Sigmoid colon (tissue), 7 donors: ENCODE measurements at regions of chr7 and their contacts with region 1.

Region 1: DNA sequence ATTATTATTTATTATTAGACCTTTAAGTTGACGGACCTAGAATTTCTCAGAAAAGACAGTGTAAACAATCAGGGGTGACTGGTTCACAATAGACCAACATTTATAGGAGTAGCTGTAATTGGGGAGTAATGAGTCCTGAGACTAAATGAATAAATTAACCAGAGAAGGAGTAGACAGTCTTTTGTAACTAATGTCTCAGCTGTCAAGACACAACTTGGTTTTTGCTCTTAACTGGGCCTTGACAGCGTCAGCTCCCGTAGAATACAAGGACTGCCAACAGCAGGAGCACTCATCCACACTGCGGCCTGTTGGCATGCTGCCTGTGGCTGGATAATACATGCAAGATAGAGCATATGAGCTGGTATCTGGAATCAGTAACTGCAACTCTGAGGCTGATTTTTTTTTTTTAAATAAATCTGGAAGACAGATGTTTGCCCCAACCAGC is 123.9 kb downstream of the CACNA2D1 start:
- DNase-seq: peak; percentile 91
- H3K4me3 ChIP-seq: no peak overlapping the region
- H3K27ac ChIP-seq: peak overlapping the region in 3 of 4 donors; percentile 37 to 72 (median 69)
- H3K4me1 ChIP-seq: peaks cover 0 to 57% (median 38%) of the 10 kb centered on the region in 4 donors
- H3K27me3 ChIP-seq: no peaks in the 10 kb centered on the region
- CTCF ChIP-seq: no peak
- EP300 ChIP-seq: no peak
- POLR2A ChIP-seq: no peak

Region 2: DNA sequence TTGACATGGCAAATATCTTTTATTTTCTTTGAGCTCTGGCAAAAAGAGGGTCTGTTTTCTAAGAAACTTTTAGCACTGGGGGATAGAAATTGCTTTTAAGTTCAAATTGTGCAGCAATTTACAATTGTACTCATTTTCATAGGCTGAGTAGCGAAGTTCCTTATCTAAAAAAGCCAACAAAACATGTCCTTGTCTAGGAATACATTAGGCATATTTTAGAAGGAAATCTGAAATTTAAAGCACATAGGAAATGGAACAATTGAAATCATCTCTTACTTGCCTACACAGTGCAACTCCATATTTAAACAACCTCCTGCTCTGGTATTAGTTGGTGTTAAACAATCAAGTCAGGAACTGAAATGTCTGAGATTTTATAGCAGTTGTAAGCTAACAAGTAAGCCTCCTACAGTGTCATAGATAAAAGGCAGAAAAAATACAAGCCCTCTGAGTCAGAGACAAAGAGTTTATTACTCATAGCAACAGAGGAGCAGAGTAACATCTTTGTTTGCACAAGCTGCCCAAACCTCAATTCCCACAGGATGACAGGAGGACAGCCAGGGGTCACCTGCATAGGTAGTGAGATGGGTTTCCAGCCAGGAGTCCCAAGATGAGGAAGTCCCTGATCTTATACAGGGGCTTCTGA is 269.7 kb before region 1 on chr7:
- intact Hi-C with region 1: loop called (anchors 5 kb)
- DNase-seq: no peak
- H3K4me3 ChIP-seq: no peak overlapping the region
- H3K27ac ChIP-seq: peak overlapping the region; percentile 12 to 78 (median 71)
- H3K4me1 ChIP-seq: peaks cover 0 to 57% (median 47%) of the 10 kb centered on the region in 4 donors
- H3K27me3 ChIP-seq: no peaks in the 10 kb centered on the region
- CTCF ChIP-seq: no peak
- EP300 ChIP-seq: peak in 2 of 4 donors; percentile 16 to 30
- POLR2A ChIP-seq: no peak

Region 3: GRCh38 chr7:82263920-82264782 is 55.5 kb before region 1 on chr7:
- intact Hi-C with region 1: no loop called
- DNase-seq: no peak
- H3K4me3 ChIP-seq: no peak overlapping the region
- H3K27ac ChIP-seq: no peak overlapping the region
- H3K4me1 ChIP-seq: peaks cover 0 to 23% (median 14%) of the 10 kb centered on the region in 4 donors
- H3K27me3 ChIP-seq: no peaks in the 10 kb centered on the region
- CTCF ChIP-seq: no peak
- EP300 ChIP-seq: no peak
- POLR2A ChIP-seq: no peak

Region 4: DNA sequence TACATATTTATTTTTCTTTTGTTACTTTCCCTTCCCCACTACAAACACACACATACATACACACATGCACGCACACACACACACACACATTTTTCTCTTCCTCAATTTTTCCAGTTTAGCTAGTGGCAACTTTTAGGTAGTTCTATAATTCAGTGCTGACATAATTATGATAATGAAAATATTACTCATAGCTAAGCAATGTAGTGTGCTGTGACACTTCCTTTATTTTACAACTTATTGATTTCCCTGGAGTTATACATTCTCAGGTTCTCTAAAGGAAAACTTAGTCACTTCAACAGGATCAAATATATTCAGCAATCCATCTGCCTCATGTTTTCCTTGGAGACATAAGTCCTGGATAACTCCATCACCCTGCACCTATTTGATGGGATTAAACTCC is 27.8 kb before region 1 on chr7:
- intact Hi-C with region 1: no loop called
- DNase-seq: no peak
- H3K4me3 ChIP-seq: no peak overlapping the region
- H3K27ac ChIP-seq: no peak overlapping the region
- H3K4me1 ChIP-seq: peaks cover 0 to 13% (median 4%) of the 10 kb centered on the region in 4 donors
- H3K27me3 ChIP-seq: no peaks in the 10 kb centered on the region
- CTCF ChIP-seq: no peak
- EP300 ChIP-seq: no peak
- POLR2A ChIP-seq: no peak

Region 5: DNA sequence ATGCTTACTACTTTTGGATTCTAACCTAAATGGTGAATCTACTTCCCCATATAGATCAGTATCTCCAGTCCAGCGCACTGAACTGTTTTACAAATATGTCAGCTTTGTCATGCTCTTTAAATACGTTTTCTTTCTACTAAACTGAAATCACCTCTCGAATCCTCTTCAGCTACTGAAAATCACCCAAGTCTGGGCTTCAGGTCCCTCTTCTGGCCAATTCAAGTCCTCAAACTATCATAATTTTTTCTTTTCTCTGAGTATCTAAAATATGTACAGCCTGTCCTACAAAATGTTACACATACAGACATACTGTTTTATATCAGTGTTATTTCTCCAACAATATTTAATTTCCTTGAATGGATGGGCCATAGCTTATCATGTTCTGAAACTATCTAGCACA is 39.7 kb after region 1 on chr7:
- intact Hi-C with region 1: no loop called
- DNase-seq: no peak
- H3K4me3 ChIP-seq: no peak overlapping the region
- H3K27ac ChIP-seq: no peak overlapping the region
- H3K4me1 ChIP-seq: peaks cover 0 to 31% (median 8%) of the 10 kb centered on the region in 4 donors
- H3K27me3 ChIP-seq: no peaks in the 10 kb centered on the region
- CTCF ChIP-seq: no peak
- EP300 ChIP-seq: no peak
- POLR2A ChIP-seq: no peak

Region 6: GRCh38 chr7:82443547-82444219 is 124.0 kb after region 1 on chr7 and contains the start of gene CACNA2D1:
- intact Hi-C with region 1: loop called (anchors 10 kb)
- DNase-seq: peak; percentile 96
- H3K4me3 ChIP-seq: peak within 1 kb of the TSS; percentile 72 to 94 (median 88)
- H3K27ac ChIP-seq: peak within 1 kb of the TSS; percentile 95 to 98 (median 96)
- H3K4me1 ChIP-seq: peaks cover 0 to 35% (median 14%) of the 10 kb centered on the region in 4 donors
- H3K27me3 ChIP-seq: no peaks in the 10 kb centered on the region
- CTCF ChIP-seq: peak in 1 of 4 experiments; percentile 44
- EP300 ChIP-seq: no peak
- POLR2A ChIP-seq: no peak
- total RNA-seq, gene CACNA2D1: 59.7 to 115 (median 87.4) TPM